AG04450 (cell line): ENCODE measurements at regions of chr5 and their contacts with region 1.

Region 1: GRCh38 chr5:657570-657969 is 35.6 kb downstream of the TPPP start:
- DNase-seq: peak; percentile 34
- H3K4me3 ChIP-seq: no peak overlapping the region
- H3K27ac ChIP-seq: peak overlapping the region; percentile 47
- H3K27me3 ChIP-seq: no peaks in the 10 kb centered on the region
- CTCF ChIP-seq: no peak

Region 2: DNA sequence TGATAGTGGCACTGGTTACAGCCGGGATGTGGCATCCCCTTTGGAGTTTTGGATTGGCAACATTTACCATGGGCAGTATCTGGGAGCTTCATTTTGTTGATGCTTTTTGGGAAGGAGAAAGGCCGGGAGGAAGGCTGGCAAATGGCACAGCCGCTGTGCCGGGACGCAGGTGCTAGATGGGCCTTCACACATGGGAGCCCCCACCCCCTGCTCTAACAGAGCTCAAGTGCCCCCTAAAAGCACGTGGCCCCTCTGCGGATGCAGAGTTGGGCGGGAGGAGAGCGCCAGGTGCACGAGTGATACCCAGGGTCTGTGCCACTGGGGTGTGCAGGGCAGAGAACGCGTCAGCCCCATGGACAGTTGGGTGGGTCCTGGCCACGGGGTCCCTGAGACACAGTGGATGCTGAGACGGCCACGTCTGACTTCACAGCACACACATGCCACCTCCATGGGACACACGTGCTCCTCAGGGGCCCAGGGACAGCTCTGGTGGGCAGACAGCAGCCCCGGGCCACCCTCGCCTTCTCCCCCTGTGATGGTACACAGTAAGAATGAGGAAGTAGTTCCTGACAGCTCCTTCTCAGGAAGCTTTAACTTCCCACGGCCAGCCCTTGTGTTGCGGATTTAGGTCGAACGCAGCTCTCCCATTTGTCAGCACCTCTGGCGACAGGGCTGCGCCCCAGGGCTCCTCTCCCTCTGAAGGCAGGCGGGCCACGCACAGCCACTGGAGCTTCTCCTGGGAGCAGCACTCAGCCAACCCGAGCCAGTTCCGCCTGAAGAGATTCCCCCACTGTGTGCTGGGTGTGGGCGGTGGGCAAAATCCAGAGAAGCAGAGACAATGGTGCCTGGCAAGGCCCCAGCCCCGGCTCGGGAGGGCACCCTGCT is 144.1 kb before region 1 on chr5:
- CTCF ChIA-PET with region 1: no interaction called
- POLR2A ChIA-PET with region 1: no interaction called
- DNase-seq: no peak
- H3K4me3 ChIP-seq: no peak overlapping the region
- H3K27ac ChIP-seq: no peak overlapping the region
- H3K27me3 ChIP-seq: peaks cover 54% of the 10 kb centered on the region
- CTCF ChIP-seq: no peak

Region 3: DNA sequence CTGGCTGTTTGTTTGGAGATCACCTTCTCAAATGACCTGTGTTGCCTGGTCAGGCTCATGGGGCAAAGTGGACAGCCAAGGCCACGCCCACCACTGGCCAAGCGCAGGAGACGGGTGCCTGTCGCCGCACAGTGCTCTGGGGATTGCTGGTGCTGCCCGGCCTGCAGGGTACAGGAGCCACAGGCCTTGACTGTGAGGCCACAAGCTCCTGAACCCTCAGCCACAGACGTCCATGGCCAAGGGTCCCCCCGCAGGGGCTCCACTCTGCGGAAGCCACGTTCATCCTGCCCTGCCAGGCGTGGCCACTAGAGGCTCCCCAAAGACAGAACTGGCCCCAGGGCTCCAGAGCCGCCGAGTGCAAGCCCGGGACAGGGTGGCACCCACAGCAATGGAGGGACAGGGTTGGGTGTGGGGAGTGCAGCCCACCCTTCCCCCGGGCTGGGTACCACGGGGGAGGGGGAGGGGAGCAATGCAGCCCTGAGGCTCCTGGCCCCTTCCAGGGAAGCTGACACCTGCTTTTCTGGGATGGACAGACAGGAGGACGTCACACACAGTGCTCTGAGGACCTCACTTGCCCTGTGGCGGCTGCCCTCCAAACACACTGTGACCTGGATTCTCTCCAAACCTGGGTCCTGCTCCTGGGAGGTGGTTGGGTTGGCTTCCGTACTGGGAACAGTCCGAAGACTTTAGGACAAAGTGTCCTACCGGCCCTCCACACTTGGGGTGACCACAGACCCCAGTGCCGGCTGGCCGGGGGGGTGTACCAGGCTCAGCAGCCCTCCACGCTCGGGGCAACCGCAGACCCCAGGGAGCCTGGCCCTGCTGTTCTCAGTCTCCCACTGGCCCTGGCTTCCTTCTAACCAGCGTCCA is 14.1 kb after region 1 on chr5:
- CTCF ChIA-PET with region 1: interaction called, 15 read pairs
- POLR2A ChIA-PET with region 1: no interaction called
- DNase-seq: peak; percentile 6
- H3K4me3 ChIP-seq: peak overlapping the region; percentile 31; the same call in 1 of the 2 replicates
- H3K27ac ChIP-seq: no peak overlapping the region
- H3K27me3 ChIP-seq: peaks cover 18% of the 10 kb centered on the region
- CTCF ChIP-seq: peak; percentile 94